ENCODE measurements at regions of chr10 and their contacts with region 1.

Region 1: DNA sequence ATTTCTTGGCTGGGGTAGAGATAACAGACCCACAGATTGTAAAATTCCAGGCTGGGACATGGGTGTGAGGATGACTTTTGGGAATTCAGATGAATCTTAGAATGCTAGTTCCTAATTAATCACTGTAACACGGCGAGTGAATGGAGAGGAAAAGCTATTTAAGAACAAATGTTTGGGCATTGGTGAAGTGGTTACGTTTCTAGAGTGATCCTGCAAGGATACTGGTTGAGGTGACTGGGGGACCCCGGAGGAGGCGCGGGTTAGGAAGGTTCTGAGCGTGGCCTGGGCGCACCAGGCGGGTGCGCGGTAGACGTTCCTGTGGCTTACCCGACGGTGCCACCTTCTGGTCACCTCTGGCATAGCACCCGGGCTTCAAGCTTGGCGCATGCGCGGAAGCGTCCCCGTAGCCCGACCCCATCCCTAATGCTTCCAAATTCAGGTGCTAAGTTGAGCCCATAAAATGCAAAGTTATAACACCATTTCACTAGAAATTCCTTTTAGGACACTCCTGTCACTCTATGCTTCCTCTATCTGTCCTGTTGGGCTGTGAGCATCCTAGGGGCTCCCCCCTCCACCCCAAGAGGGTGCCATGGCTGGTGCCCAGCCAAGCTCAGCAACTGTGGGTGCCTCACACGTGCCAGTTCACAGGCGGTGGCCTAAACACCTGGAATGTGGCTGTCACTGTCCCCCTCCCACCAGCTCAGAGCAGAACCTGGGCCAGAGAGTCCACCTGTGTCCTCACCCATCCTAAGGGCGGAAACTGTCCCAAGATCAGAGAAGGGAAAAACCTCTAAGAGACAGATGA is 104.5 kb downstream of the PTPRE start:
- DNase-seq: peak; percentile 92
- CTCF ChIP-seq: peak; percentile 93

Region 2: DNA sequence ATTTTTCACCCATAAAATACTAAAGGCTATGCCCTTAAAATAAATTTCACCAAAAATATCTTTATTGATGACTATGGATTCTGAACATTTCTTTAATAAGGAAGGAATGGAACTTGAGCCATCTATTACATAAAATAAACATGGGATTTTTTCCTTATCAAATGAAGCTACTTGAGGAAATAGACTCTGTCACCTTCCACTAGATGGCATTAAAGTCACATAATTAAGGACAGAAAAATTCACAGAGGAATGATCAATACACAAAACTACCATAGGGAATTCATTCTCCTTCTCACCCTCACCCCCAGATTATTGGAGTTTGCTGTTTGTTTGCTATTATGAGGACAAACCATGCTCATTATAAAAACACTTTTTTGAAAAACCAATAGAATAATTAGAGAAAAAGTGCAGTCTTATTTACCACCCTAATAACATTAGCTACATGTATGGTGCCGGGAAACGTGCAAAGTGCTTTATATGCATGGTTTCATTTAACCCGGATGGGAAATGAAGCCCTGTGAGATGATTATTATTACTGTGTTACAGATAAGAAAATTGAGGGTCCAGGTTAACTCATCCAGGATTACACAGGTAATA is 295.5 kb before region 1 on chr10:
- CTCF ChIA-PET with region 1: interaction called, 10 read pairs
- POLR2A ChIA-PET with region 1: no interaction called
- DNase-seq: peak; percentile 29
- CTCF ChIP-seq: peak; percentile 51

Region 3: DNA sequence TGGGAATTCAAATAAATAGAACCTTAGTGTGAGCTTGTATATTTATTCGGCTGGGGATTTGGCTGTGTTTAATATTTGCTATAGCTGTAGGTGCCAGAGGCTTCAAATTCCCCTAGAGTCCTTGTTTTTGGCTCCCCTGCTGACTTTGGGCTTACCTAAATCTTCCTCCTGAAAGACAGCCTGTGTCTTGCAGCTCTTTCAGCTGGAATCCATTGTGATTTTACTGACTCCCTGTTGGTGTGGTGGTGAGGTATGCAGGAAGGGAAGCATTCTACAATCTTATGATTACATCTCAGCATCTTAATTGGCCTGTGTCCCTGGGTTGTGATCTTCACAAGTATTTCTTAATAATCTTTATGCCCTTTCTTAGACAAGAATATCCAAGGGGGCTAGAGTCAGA is 248.5 kb before region 1 on chr10:
- CTCF ChIA-PET with region 1: no interaction called
- POLR2A ChIA-PET with region 1: no interaction called
- DNase-seq: no peak
- CTCF ChIP-seq: no peak

Region 4: DNA sequence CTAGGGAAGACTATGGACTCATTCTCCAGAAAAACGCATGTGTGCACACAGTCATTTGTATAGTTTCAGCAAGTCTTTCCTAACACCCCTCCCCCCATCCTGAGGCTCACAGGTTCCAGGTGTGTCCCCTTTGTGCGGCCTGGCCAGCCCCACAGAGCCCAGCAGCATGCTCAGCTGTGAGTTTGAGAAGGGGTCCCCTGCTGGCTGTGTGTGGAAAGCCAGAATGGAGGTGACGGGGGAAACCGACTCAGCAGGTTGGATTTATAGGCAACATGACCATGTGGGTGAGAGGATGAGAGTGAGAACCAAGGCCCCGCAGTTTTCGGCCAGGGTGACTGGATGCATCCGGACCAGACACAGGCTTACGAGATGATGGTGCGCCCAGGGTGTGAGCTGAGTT is 94.6 kb before region 1 on chr10:
- CTCF ChIA-PET with region 1: no interaction called
- POLR2A ChIA-PET with region 1: no interaction called
- DNase-seq: no peak
- CTCF ChIP-seq: no peak

Region 5: DNA sequence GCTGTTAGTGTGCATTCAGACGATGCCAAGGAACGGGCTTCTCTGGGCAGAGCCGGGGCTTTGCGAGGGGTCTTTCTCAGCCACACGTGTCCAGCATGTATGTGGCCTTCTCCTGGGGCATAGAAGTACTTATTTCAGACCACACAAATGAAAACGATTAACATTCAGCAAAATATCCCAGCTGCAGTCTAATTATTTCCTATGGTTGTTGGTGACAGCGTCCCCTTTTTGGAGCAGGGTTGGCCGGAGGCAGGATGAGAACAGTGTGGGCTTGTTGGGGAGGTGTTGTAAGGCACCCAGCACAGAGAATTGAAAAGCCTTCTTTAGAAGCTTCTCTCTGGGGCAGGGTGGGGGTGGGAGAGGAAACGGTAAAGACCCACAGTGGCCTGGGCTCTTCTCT is 50.3 kb before region 1 on chr10:
- CTCF ChIA-PET with region 1: no interaction called
- POLR2A ChIA-PET with region 1: no interaction called
- DNase-seq: no peak
- CTCF ChIP-seq: no peak

Region 6: GRCh38 chr10:128000471-128001362 is 10.7 kb before region 1 on chr10:
- CTCF ChIA-PET with region 1: interaction called, 10 read pairs
- POLR2A ChIA-PET with region 1: no interaction called
- DNase-seq: no peak
- CTCF ChIP-seq: no peak

Region 7: DNA sequence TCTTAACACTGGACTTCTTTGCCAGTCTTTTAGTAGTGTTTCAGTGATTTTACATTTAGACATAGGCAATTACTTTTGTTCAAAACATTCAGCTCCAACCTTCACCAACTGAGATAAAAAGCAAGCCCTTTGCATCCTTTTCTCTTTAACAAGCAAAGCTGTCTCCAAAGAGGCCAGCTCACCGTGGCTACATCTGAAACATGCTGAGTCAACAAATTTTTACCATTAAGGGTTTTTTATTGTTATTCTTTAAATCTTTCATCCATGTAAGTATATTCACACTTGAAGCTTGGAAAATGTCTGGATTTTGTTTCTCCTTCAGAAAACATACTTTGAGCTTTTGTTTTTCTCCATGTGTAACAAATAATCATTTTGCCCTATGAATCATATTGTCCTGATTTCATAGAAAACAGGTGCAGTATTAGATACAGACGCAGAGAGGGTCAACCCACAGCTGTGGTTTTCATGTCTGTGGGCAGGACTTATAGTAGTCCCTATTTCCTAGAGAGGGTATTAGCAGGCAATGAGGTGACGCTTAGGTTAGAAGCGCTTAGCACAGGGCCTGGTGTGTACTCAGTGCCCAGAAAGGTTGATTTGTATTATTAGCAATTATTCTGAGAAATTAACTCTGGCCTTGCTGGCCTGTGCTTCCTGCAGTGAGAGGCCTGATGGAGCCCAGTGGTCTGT is 15.4 kb after region 1 on chr10:
- CTCF ChIA-PET with region 1: interaction called, 41 read pairs
- POLR2A ChIA-PET with region 1: no interaction called
- DNase-seq: no peak
- CTCF ChIP-seq: no peak

Region 8: GRCh38 chr10:128064108-128064969 is 53.0 kb after region 1 on chr10:
- CTCF ChIA-PET with region 1: interaction called, 19 read pairs
- POLR2A ChIA-PET with region 1: no interaction called
- DNase-seq: peak; percentile 53
- CTCF ChIP-seq: no peak

Region 9: DNA sequence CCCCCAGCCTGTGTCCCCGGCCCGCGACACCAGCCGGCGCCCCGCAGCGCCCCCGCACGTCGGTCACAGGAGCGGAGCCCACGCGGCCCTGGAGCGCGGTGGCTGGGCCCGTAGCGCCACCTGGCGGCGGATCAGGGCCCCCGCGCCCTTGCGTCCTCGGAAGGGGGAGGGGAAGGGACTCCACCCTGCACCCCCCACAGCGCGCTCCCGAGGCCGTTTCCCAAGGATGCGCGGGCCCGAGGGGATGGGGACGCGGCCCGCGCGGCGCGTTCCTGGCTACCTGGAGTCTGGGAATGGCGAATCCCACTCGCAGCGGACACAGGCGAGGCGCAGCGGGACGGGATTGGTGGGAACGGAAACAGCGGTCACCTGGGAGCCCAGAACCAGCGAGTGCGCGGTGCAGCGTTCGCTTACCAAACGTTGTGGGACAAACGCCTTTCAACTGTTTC is 138.7 kb after region 1 on chr10:
- CTCF ChIA-PET with region 1: interaction called, 11 read pairs
- POLR2A ChIA-PET with region 1: no interaction called
- DNase-seq: peak; percentile 92
- CTCF ChIP-seq: peak; percentile 100